ENCODE measurements at regions of chr11 and their contacts with region 1.

Region 1: GRCh38 chr11:15650105-15650938 is 535.6 kb downstream of the INSC start:
- DNase-seq: peak; percentile 89
- H3K4me3 ChIP-seq: peak overlapping the region; percentile 22 to 34
- H3K27ac ChIP-seq: peak overlapping the region; percentile 71 to 79
- H3K4me1 ChIP-seq: no peaks in the 10 kb centered on the region
- H3K27me3 ChIP-seq: no peaks in the 10 kb centered on the region
- CTCF ChIP-seq: peak; percentile 94 to 99 (median 98)
- POLR2A ChIP-seq: no peak

Region 2: GRCh38 chr11:14842002-14842401 is 808.3 kb before region 1 on chr11:
- intact Hi-C with region 1: no loop called
- DNase-seq: no peak
- H3K4me3 ChIP-seq: no peak overlapping the region
- H3K27ac ChIP-seq: no peak overlapping the region
- H3K4me1 ChIP-seq: no peaks in the 10 kb centered on the region
- H3K27me3 ChIP-seq: no peaks in the 10 kb centered on the region
- CTCF ChIP-seq: no peak
- POLR2A ChIP-seq: no peak

Region 3: GRCh38 chr11:14954581-14954980 is 695.7 kb before region 1 on chr11:
- intact Hi-C with region 1: no loop called
- DNase-seq: no peak
- H3K4me3 ChIP-seq: no peak overlapping the region
- H3K27ac ChIP-seq: no peak overlapping the region
- H3K4me1 ChIP-seq: no peaks in the 10 kb centered on the region
- H3K27me3 ChIP-seq: no peaks in the 10 kb centered on the region
- CTCF ChIP-seq: no peak
- POLR2A ChIP-seq: no peak

Region 4: DNA sequence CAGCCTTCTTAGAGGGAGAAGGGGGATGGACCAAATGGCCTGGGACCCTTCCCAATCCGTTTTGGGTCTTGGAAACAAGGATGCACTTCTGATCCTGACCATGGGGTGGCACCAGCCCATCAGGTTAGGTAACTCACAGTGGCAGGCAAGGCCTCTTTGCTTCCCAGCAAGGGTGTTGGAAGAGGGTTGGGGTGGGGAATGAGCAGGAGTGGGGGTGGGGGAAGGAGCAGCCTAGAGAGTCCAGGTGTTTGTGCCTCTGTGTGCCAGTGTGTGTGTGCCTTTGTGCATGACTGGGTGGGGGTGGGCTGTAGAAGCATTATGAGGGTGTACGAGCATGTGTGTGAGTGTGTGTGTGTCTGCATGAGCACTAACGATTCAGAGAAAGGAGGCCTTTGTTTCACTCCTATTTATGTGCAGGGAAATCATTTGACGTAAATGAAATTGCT is 322.5 kb before region 1 on chr11:
- intact Hi-C with region 1: loop called (anchors 5 kb)
- DNase-seq: peak; percentile 59
- H3K4me3 ChIP-seq: no peak overlapping the region
- H3K27ac ChIP-seq: no peak overlapping the region
- H3K4me1 ChIP-seq: no peaks in the 10 kb centered on the region
- H3K27me3 ChIP-seq: no peaks in the 10 kb centered on the region
- CTCF ChIP-seq: peak; percentile 47 to 70 (median 62)
- POLR2A ChIP-seq: no peak

Region 5: GRCh38 chr11:15430381-15430780 is 219.9 kb before region 1 on chr11:
- intact Hi-C with region 1: no loop called
- DNase-seq: no peak
- H3K4me3 ChIP-seq: no peak overlapping the region
- H3K27ac ChIP-seq: no peak overlapping the region
- H3K4me1 ChIP-seq: no peaks in the 10 kb centered on the region
- H3K27me3 ChIP-seq: no peaks in the 10 kb centered on the region
- CTCF ChIP-seq: no peak
- POLR2A ChIP-seq: no peak

Region 6: GRCh38 chr11:15707971-15708370 is 57.6 kb after region 1 on chr11:
- intact Hi-C with region 1: no loop called
- DNase-seq: peak; percentile 81
- H3K4me3 ChIP-seq: no peak overlapping the region
- H3K27ac ChIP-seq: peak overlapping the region in 1 of 2 donors; percentile 17
- H3K4me1 ChIP-seq: no peaks in the 10 kb centered on the region
- H3K27me3 ChIP-seq: no peaks in the 10 kb centered on the region
- CTCF ChIP-seq: peak in 1 of 4 experiments; percentile 45
- POLR2A ChIP-seq: no peak

Region 7: GRCh38 chr11:15988693-15989231 is 338.4 kb after region 1 on chr11:
- intact Hi-C with region 1: loop called (anchors 10 kb)
- DNase-seq: no peak
- H3K4me3 ChIP-seq: no peak overlapping the region
- H3K27ac ChIP-seq: no peak overlapping the region
- H3K4me1 ChIP-seq: no peaks in the 10 kb centered on the region
- H3K27me3 ChIP-seq: no peaks in the 10 kb centered on the region
- CTCF ChIP-seq: peak in 1 of 4 experiments; percentile 24
- POLR2A ChIP-seq: no peak

Region 8: DNA sequence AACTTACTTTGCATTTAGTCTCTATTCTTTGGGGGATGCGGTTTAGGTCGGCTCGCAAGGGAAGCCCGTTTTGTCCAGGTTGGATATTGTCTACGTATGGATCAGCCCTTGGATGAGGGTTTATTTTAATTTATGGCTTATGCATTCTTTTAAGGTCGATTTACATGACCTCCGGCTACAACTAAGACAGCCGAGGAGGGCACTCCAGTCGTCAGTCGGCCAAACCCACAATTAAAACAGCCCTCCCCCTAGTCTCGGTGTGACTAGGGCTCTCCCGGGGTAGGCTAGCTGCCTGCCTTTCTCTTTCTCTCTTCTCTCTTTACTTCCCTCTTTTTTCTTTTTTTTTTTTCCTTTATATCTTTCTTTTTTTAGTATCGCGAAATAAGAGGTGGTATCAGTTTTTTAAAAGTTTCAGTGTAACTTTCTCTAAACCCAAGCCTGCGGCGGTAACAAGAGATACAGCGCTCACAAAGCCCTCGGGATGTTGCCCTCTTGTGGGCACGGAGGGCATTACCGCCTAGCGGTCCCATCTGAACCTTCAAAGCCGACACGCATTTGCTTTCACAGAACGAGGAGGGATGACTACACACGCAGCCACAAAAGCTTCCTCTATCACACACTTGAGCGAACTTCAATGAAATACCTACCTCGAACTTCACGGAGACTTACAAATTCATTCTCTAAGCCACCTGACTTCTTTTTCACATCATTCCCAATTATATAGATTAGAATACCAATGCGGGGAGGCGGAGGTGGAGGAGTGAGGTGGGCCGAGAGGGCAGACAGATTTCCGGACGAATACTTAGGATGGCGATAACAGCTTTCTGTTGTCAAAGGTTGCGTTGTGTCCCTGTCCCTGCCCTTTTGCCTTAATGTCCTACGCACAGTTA is 955.8 kb after region 1 on chr11:
- intact Hi-C with region 1: loop called (anchors 2 kb)
- DNase-seq: peak; percentile 90
- H3K4me3 ChIP-seq: peak overlapping the region; percentile 49 to 51
- H3K27ac ChIP-seq: peak overlapping the region; percentile 60 to 71
- H3K4me1 ChIP-seq: no peaks in the 10 kb centered on the region
- H3K27me3 ChIP-seq: peaks cover 11% of the 10 kb centered on the region
- CTCF ChIP-seq: peak; percentile 91 to 94 (median 92)
- POLR2A ChIP-seq: peak; percentile 50

Region 9: DNA sequence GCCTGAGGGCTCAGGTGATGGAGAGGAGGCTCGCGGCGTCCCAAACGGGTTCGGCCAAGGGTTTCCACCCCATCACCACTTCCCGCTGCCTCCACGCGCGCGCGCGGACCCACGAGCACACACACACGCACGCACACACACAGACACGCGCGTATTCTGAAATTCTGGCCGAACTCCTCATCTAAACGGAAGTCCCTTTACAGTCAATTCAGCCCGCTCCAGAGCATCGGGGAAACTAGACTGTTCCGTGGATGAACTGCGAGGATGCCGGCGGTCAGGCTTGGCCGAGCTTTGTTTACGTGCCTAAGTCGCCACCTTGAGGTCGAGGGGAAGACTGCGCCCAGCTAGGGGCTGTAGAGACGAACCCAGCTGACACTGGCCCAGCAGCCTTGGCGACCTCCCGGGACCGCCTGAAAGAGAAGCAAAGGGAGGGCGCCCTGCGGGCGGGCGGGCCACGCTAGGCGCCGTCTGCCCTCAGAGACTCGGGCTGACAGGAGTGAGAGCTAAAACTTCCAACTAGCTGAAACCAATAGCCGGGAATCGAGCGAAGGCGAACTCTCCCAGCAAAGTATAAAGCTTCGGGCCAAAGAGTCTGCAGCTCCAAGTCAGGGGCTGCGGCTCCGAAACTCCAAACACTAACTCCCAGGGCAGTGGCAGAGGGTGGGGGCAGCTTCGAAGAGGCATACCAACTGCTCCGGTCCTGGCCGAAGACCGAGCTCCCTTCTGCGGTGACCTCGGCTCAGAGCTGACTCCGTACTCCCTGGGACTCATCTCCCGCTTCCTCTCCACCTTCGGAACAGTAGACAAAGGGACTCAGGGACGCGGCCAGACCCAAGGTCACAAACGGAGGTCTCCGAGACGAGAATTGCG is 963.4 kb after region 1 on chr11:
- intact Hi-C with region 1: loop called (anchors 2 kb)
- DNase-seq: peak; percentile 81
- H3K4me3 ChIP-seq: peak overlapping the region in 1 of 2 donors; percentile 22
- H3K27ac ChIP-seq: no peak overlapping the region
- H3K4me1 ChIP-seq: peaks cover 5% of the 10 kb centered on the region
- H3K27me3 ChIP-seq: peaks cover 28% of the 10 kb centered on the region
- CTCF ChIP-seq: peak; percentile 40 to 87 (median 79)
- POLR2A ChIP-seq: no peak

Measured in prostate gland (tissue), 2 donors.